ENCODE measurements at regions of chr5 and their contacts with region 1.

Region 1: GRCh38 chr5:109454731-109455505 is 45.1 kb upstream of the PJA2 start:
- DNase-seq: no peak

Region 2: DNA sequence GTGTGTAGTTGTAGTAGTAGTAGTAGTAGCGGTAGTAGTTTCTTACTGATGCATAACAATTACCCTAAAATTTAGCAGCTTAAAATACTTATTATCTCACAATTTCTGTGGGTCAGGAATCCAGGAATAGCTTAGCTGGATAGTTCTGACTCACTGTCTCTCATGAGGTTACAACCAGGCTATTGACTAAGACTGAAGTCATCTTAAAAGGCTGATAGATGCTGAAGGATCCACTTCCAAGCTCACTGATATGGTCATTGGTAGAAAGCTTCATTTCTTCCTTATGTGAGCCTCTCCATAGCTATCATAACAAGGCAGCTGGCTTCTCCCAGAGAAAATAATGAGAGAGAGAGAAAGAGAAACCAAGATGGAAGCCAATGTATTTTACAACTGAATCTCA is 925.5 kb before region 1 on chr5:
- intact Hi-C with region 1: loop called (anchors 5 kb)
- DNase-seq: no peak

Region 3: DNA sequence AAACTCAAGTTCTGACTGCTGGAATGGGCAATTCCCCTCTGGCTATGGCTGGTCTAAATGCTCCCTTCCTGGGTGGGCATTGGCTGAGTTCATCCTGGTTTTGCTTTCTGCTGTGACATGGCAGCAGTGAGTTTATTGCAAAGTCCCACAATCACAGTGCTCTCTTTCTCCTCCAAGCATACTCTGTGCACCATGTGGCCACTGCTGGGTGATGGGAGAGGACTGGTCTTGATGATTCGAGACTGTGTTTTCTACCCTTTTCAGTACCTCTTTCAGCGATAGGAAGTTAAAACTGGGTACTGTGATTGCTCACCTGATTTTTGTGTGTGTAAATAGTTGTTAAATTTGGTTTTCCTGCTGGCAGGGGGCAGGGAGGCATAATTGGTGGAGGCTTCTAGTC is 657.5 kb before region 1 on chr5:
- intact Hi-C with region 1: no loop called
- DNase-seq: no peak

Region 4: GRCh38 chr5:109486200-109486804 is 31.4 kb after region 1 on chr5:
- intact Hi-C with region 1: no loop called
- DNase-seq: no peak